Naive thymus-derived CD4-positive, alpha-beta T cell (primary cell): ENCODE measurements at regions of chr3 and their contacts with region 1.

Region 1: DNA sequence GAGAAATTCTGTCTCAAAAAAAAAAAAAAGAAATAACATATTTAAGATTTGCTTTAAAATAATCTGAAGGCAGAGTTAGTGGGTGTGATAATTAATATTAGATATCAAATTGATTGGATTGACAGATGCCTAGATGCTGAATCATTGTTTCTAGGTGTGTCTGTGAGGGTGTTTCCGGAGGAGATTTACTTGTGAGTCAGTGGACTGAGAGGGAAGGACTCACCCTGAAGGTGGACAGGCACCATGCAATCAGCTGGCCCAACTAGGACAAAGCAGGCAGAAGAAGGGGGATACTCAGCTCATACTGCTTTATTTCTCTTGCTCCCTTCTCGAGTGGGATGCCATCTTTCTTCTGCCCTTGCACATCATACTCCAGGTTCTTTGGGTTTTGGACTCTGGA is 16.7 kb upstream of the RPL24 start:
- DNase-seq: no peak
- ATAC-seq: no peak
- H3K4me3 ChIP-seq: no peak overlapping the region
- H3K4me3 Mint-ChIP-seq: no peak overlapping the region
- H3K27ac ChIP-seq: no peak overlapping the region
- H3K27ac Mint-ChIP-seq: no peak overlapping the region
- H3K4me1 ChIP-seq: no peaks in the 10 kb centered on the region
- H3K4me1 Mint-ChIP-seq: no peaks in the 10 kb centered on the region
- H3K27me3 ChIP-seq: no peaks in the 10 kb centered on the region
- H3K27me3 Mint-ChIP-seq: no peaks in the 10 kb centered on the region

Region 2: DNA sequence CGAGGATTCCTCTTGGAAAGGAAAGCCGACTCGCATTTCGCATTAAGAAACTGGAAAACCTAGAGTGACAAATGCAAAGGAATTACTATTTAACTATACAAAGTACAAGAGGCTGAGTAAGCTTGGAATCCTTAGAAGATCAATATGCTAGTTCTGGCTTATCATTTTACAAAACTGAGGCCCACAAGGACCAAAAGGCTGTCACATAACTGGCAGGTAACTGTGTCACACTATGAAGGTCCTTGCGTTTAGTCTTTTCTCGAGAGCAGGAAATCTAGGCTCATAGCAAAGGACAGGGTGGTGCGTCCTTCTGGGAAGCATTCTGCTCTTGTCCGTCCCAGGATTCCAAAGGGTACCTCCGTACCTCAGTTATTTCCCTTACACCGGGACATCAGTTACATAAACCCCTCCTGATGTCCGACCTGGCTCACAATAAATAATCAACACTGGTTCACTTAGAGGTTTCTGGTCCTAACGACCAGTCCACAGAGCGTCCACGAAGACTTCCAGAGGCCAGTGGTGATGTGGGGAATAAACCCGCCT is 17.2 kb before region 1 on chr3:
- CTCF ChIA-PET with region 1: no interaction called
- POLR2A ChIA-PET with region 1: no interaction called
- intact Hi-C with region 1: loop called in 1 of 2 experiments (anchors 2 kb)
- DNase-seq: peak in 2 of 9 donors; percentile 21 to 24
- ATAC-seq: peak; percentile 1
- H3K4me3 ChIP-seq: peak overlapping the region; percentile 72
- H3K4me3 Mint-ChIP-seq: peak overlapping the region; percentile 90 to 100 (median 98)
- H3K27ac ChIP-seq: peak overlapping the region; percentile 92
- H3K27ac Mint-ChIP-seq: peak overlapping the region; percentile 94 to 100 (median 99)
- H3K4me1 ChIP-seq: peaks cover 24 to 25% of the 10 kb centered on the region in 2 donors
- H3K4me1 Mint-ChIP-seq: peaks cover 20 to 58% (median 41%) of the 10 kb centered on the region in 7 donors
- H3K27me3 ChIP-seq: no peaks in the 10 kb centered on the region
- H3K27me3 Mint-ChIP-seq: no peaks in the 10 kb centered on the region

Region 3: GRCh38 chr3:102038477-102039142 is 335.4 kb after region 1 on chr3:
- CTCF ChIA-PET with region 1: no interaction called
- POLR2A ChIA-PET with region 1: no interaction called
- intact Hi-C with region 1: no loop called
- DNase-seq: no peak
- ATAC-seq: peak; percentile 83
- H3K4me3 ChIP-seq: no peak overlapping the region
- H3K4me3 Mint-ChIP-seq: no peak overlapping the region
- H3K27ac ChIP-seq: no peak overlapping the region
- H3K27ac Mint-ChIP-seq: peak overlapping the region in 2 of 9 donors; percentile 21 to 48
- H3K4me1 ChIP-seq: no peaks in the 10 kb centered on the region
- H3K4me1 Mint-ChIP-seq: peaks cover 0 to 12% (median 8%) of the 10 kb centered on the region in 7 donors
- H3K27me3 ChIP-seq: no peaks in the 10 kb centered on the region
- H3K27me3 Mint-ChIP-seq: peaks cover 0 to 9% (median 0%) of the 10 kb centered on the region in 5 donors